ENCODE measurements at regions of chrX and their contacts with region 1.

Region 1: GRCh38 chrX:42695800-42696358 is 82.1 kb downstream of the PPP1R2C start:
- DNase-seq: no peak
- H3K4me3 ChIP-seq: no peak overlapping the region
- H3K4me3 Mint-ChIP-seq: no peak overlapping the region
- H3K27ac Mint-ChIP-seq: peak overlapping the region; percentile 24
- H3K4me1 ChIP-seq: peaks cover 22% of the 10 kb centered on the region
- H3K4me1 Mint-ChIP-seq: peaks cover 22% of the 10 kb centered on the region
- H3K27me3 ChIP-seq: no peaks in the 10 kb centered on the region
- H3K27me3 Mint-ChIP-seq: no peaks in the 10 kb centered on the region
- CTCF ChIP-seq: no peak

Region 2: DNA sequence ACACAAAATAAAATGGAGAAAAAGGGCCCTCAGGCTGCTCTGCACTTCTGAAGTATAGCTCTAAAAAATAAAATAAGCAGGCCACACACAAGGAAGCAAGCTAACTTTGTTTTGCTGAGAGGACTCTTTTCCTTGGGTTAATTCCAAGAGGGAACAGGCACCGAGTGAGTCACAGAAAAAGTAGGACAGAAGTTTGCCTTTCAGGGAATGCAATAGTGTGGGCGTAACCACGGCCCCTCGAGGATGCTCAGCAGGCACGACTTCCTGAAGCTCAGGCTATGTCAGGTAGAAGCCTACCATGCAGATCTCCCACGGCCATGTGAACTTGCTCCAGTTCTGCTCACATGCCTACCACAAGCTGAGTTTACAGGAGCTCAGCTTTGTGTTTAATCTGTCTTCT is 59.9 kb after region 1 on chrX:
- CTCF ChIA-PET with region 1: no interaction called
- POLR2A ChIA-PET with region 1: no interaction called
- intact Hi-C with region 1: loop called (anchors 2 kb)
- DNase-seq: no peak
- H3K4me3 ChIP-seq: no peak overlapping the region
- H3K4me3 Mint-ChIP-seq: no peak overlapping the region
- H3K27ac Mint-ChIP-seq: peak overlapping the region; percentile 78
- H3K4me1 ChIP-seq: peaks cover 42% of the 10 kb centered on the region
- H3K4me1 Mint-ChIP-seq: peaks cover 15% of the 10 kb centered on the region
- H3K27me3 ChIP-seq: no peaks in the 10 kb centered on the region
- H3K27me3 Mint-ChIP-seq: no peaks in the 10 kb centered on the region
- CTCF ChIP-seq: no peak